MCF 10A (cell line): ENCODE measurements at regions of chr13 and their contacts with region 1.

Region 1: DNA sequence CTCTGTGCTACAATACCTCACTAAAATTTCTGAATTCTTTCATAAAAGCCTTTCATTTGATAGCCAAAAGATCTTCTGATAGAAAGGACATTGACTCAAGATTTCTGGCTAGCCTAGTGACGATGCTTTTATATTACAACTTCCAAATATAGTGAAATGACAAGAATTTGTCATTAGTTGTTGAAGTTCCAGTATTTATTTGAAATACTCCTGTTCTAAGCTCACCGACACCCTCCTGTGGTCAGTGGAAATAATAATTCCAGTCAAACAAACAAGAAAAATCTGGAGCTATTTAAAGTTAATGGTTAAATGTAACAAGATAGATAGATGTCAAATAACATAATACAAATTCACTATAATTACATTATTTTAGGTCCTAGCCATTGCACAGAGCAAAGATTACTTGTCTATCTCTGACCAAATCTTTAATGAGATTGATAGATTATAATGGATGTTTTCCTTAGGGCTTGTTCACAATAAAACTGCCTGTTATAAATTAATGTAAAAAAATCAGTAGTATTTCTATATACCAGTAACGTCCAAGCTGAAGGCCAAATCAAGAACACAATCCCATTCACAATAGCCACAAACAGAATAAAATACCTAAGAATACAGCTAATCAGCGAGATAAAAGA is 195.5 kb downstream of the RGCC start:
- DNase-seq: peak; percentile 54
- H3K4me3 Mint-ChIP-seq: no peak overlapping the region
- H3K27ac Mint-ChIP-seq: peak overlapping the region; percentile 59
- H3K4me1 Mint-ChIP-seq: peaks cover 10% of the 10 kb centered on the region
- H3K27me3 Mint-ChIP-seq: no peaks in the 10 kb centered on the region
- CTCF ChIP-seq: peak; percentile 69

Region 2: DNA sequence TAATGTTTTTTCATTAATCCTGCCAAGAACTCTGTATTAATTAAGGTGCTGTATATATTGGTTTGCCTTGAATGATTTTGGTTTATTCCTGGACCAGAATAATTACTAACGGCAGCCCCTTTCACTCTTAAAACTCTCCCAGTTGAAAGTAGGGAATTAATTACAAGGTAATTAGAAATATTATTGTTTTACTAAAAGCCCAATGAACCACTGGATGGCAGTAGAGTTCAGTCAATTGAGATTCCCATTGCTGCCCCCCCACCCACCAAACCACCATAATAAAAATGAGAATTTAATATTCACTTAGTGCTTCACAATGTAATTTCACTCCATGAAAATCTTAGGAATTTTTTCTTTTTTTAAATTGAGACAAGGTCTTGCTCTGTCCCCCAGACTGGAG is 577.8 kb before region 1 on chr13:
- CTCF ChIA-PET with region 1: no interaction called
- POLR2A ChIA-PET with region 1: no interaction called
- intact Hi-C with region 1: loop called (anchors 5 kb)
- DNase-seq: peak; percentile 53
- H3K4me3 Mint-ChIP-seq: no peak overlapping the region
- H3K27ac Mint-ChIP-seq: no peak overlapping the region
- H3K4me1 Mint-ChIP-seq: no peaks in the 10 kb centered on the region
- H3K27me3 Mint-ChIP-seq: no peaks in the 10 kb centered on the region
- CTCF ChIP-seq: peak; percentile 57

Region 3: DNA sequence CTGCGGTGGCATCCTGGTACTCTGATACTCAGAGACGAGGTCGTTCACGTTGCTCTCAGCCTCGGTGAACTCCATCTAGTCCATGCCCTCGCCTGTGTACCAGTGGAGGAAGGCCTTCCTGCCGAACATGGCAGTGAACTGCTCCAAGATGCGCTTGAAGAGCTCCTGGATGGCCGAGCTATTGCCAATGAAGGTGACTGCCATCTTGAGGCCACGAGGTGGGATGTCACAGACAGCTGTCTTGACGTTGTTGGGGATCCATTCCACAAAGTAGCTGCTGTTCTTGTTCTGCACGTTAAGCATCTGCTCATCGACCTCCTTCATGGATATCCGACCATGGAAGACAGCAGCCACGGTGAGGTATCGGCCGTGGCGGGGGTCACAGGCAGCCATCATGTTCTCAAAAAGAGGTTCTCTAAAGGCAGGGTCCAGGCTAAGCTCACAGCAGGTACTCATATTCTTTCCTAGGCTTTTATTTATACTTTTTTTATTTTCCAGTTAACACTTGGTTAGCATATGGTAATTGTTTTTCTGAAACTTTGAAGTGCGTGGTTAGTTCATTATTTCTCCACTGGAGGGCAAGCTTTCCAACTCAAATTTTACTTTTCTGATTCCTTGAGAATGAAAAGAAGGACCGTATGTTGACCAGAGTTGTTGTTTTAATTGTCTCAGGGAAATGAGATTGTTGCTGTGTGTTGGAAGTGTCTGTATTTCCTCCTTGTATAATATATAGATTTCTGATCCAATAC is 267.9 kb before region 1 on chr13:
- CTCF ChIA-PET with region 1: interaction called, 29 read pairs
- POLR2A ChIA-PET with region 1: interaction called, 4 read pairs
- intact Hi-C with region 1: loop called (anchors 1 kb)
- DNase-seq: peak; percentile 18
- H3K4me3 Mint-ChIP-seq: no peak overlapping the region
- H3K27ac Mint-ChIP-seq: no peak overlapping the region
- H3K4me1 Mint-ChIP-seq: no peaks in the 10 kb centered on the region
- H3K27me3 Mint-ChIP-seq: peaks cover 19% of the 10 kb centered on the region
- CTCF ChIP-seq: peak; percentile 42

Region 4: DNA sequence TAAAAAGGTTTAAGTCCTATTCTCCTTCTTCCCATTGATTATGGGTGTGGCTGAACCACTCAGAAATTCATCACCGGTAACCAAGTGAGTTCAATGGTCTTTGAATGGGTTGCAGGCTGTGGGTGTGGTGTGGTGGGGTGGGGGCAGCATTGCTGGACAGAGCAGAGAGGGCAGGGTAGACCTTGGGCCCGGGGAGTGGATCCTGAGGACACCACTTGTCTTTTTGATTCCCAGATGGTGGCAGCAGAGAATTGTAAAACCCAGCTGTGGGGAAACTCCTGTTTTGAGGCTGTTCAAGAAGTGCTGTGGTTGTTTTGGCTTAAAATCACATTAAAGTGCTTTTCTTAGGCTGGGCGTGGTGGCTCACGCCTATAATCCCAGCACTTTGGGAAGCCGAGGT is 241.3 kb before region 1 on chr13:
- CTCF ChIA-PET with region 1: interaction called, 122 read pairs
- POLR2A ChIA-PET with region 1: interaction called, 8 read pairs
- intact Hi-C with region 1: loop called (anchors 1 kb)
- DNase-seq: peak; percentile 59
- H3K4me3 Mint-ChIP-seq: no peak overlapping the region
- H3K27ac Mint-ChIP-seq: no peak overlapping the region
- H3K4me1 Mint-ChIP-seq: no peaks in the 10 kb centered on the region
- H3K27me3 Mint-ChIP-seq: no peaks in the 10 kb centered on the region
- CTCF ChIP-seq: peak; percentile 54

Region 5: DNA sequence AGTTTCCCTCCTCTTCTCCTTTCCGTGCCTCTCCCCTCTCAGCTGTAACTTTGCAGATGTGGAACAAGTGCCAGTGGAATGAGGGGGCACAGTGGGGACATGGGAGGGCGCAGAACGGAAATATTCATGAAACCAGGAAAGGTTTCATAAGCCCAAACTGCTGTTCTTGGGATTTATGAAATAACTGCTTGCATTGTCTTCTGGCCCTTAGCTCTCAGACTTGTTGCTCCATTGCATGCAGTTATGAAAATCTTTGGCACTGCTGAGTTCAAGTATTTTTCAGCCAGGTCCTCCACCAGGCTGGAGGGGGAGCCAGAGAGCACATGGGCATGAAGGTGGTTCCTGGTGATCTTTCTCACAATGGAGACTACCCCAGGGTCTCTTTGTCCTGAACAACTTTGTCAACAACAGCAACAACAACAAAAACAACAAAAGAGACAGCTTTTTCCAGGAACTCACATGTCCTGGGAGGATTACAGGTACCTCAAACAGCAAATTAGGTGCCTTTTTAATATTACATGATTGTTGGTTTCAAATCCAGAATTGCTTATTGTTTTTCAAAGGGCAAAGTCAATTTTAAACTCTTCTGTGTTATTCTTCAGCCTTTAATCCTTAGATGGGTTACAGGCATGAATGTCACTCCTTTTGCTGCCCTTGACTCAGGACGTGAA is 193.9 kb before region 1 on chr13:
- CTCF ChIA-PET with region 1: interaction called, 20 read pairs
- POLR2A ChIA-PET with region 1: interaction called, 3 read pairs
- intact Hi-C with region 1: loop called (anchors 1 kb)
- DNase-seq: peak; percentile 56
- H3K4me3 Mint-ChIP-seq: peak overlapping the region; percentile 67
- H3K27ac Mint-ChIP-seq: no peak overlapping the region
- H3K4me1 Mint-ChIP-seq: peaks cover 12% of the 10 kb centered on the region
- H3K27me3 Mint-ChIP-seq: no peaks in the 10 kb centered on the region
- CTCF ChIP-seq: peak; percentile 57

Region 6: DNA sequence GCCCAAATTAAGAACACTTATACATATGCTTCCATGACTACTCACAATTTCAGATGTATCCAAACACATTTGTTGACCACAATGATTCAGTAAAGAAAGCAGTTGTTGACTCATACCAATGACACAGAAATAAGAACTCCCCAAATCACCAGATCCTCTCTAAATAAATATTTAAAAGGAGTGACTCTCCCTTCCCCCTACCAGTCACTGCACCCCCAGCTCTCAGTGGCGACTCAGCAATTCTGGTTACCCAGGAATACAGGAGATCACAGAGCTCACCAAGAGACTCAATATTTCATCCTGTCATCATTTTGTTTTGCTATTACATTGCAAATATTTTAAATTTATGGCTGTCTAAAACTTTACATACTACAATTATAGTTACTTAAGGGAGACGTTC is 63.9 kb before region 1 on chr13:
- CTCF ChIA-PET with region 1: interaction called, 3 read pairs
- POLR2A ChIA-PET with region 1: interaction called, 3 read pairs
- intact Hi-C with region 1: loop called (anchors 10 kb)
- DNase-seq: peak; percentile 75
- H3K4me3 Mint-ChIP-seq: no peak overlapping the region
- H3K27ac Mint-ChIP-seq: peak overlapping the region; percentile 96
- H3K4me1 Mint-ChIP-seq: peaks cover 20% of the 10 kb centered on the region
- H3K27me3 Mint-ChIP-seq: no peaks in the 10 kb centered on the region
- CTCF ChIP-seq: no peak

Region 7: DNA sequence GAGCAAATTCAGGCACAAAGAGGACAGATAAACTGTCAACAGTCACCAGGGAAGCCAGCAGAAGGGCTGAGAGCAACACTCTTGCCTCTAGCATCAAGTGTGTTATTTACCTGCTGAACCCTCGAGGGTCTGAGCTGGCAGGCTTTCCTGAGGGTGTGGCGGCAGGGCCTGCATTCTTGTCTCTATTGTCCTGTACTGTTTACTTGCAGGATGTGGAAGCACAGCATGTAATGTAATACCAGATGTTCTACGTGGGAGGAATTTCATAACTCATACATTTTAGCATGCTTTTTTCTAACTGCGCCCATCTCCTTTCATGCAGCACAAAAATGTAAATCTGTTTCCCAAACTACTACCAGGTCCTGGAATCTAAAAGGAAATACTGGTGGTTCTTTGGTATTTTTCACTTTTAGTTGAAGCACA is 42.5 kb before region 1 on chr13:
- CTCF ChIA-PET with region 1: interaction called, 6 read pairs
- POLR2A ChIA-PET with region 1: interaction called, 10 read pairs
- intact Hi-C with region 1: no loop called
- DNase-seq: peak; percentile 89
- H3K4me3 Mint-ChIP-seq: peak overlapping the region; percentile 3
- H3K27ac Mint-ChIP-seq: peak overlapping the region; percentile 97
- H3K4me1 Mint-ChIP-seq: peaks cover 45% of the 10 kb centered on the region
- H3K27me3 Mint-ChIP-seq: no peaks in the 10 kb centered on the region
- CTCF ChIP-seq: no peak